ENCODE measurements at regions of chr21 and their contacts with region 1.

Region 1: GRCh38 chr21:41678944-41679343 is 87.9 kb downstream of the RIPK4 start:
- DNase-seq: peak; percentile 98
- ATAC-seq: peak; percentile 93
- H3K4me3 ChIP-seq: peak overlapping the region; percentile 38 to 70 (median 40); a peak in 5 of 6 replicates
- H3K27ac ChIP-seq: peak overlapping the region; percentile 69
- H3K4me1 ChIP-seq: peaks cover 51% of the 10 kb centered on the region
- H3K27me3 ChIP-seq: peaks cover 2 to 28% of the 10 kb centered on the region in 2 experiments; a peak in 4 of 5 replicates
- CTCF ChIP-seq: no peak
- EP300 ChIP-seq: no peak
- POLR2A ChIP-seq: peak; percentile 17 to 45; a peak in 1 of 4 replicates
- RAD21 ChIP-seq: no peak

Region 2: DNA sequence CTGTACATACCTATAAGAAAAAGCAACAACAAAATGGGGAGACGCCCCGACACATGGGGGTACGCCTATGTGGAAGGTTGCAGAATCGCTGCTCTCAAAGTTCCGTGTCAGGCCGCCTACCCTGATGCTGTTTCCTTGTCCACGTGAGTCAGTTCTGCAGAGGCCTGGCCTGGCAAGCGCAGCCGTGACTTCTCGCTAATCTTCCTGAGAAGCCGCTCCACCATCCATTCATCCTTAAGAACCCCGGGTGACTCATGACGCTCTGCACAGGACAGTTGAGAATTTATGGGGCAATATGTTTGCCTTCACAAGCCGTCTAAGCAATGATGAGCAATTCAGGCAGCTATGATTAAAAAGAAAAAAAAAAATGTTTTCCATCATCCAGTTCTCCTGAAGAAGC is 48.7 kb before region 1 on chr21:
- CTCF ChIA-PET with region 1: no interaction called
- POLR2A ChIA-PET with region 1: no interaction called
- in situ Hi-C with region 1: no loop called
- intact Hi-C with region 1: no loop called
- DNase-seq: no peak
- ATAC-seq: no peak
- H3K4me3 ChIP-seq: no peak overlapping the region
- H3K27ac ChIP-seq: no peak overlapping the region
- H3K4me1 ChIP-seq: peaks cover 7% of the 10 kb centered on the region
- H3K27me3 ChIP-seq: 0 out of 5 replicates have a peak, but pooled peaks cover 0 to 4% of the 10 kb centered on the region in 2 experiments
- CTCF ChIP-seq: no peak
- EP300 ChIP-seq: no peak
- POLR2A ChIP-seq: no peak
- RAD21 ChIP-seq: no peak

Region 3: GRCh38 chr21:41663801-41664788 is 14.8 kb before region 1 on chr21:
- CTCF ChIA-PET with region 1: no interaction called
- POLR2A ChIA-PET with region 1: interaction called, 13 read pairs
- in situ Hi-C with region 1: no loop called
- intact Hi-C with region 1: no loop called
- DNase-seq: peak; percentile 80
- ATAC-seq: peak; percentile 87
- H3K4me3 ChIP-seq: peak overlapping the region in 2 of 3 experiments; percentile 4 to 60; a peak in 2 of 6 replicates
- H3K27ac ChIP-seq: no peak overlapping the region
- H3K4me1 ChIP-seq: peaks cover 24% of the 10 kb centered on the region
- H3K27me3 ChIP-seq: peaks cover 2 to 37% of the 10 kb centered on the region in 2 experiments; a peak in 4 of 5 replicates
- CTCF ChIP-seq: peak; percentile 64
- EP300 ChIP-seq: no peak
- POLR2A ChIP-seq: no peak
- RAD21 ChIP-seq: 0 out of 2 replicates have a peak, but pooled peaks have one; percentile 28

Region 4: DNA sequence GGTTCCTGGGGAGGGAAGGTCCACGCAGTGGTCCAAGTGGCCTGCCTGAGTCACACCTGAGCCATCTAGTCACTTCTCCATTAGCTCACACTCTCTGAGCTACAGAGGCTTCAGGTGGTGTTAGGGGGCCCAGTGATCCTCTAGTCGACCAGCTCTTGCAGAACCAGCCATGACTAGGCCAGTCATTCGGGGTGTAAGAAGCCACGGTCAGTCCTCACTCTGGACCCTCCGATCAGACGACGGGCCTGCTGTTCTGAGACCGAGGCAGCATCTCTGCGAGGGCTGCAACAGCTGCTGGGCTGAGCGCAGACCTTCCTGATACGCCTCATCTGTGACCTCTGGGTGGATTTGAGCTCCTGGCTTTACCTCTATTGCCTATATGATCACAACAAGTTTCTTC is 19.1 kb after region 1 on chr21:
- CTCF ChIA-PET with region 1: no interaction called
- POLR2A ChIA-PET with region 1: no interaction called
- in situ Hi-C with region 1: no loop called
- intact Hi-C with region 1: no loop called
- DNase-seq: no peak
- ATAC-seq: no peak
- H3K4me3 ChIP-seq: no peak overlapping the region
- H3K27ac ChIP-seq: no peak overlapping the region
- H3K4me1 ChIP-seq: peaks cover 44% of the 10 kb centered on the region
- H3K27me3 ChIP-seq: no peaks in the 10 kb centered on the region; a peak in 1 of 5 replicates
- CTCF ChIP-seq: no peak
- EP300 ChIP-seq: no peak
- POLR2A ChIP-seq: no peak
- RAD21 ChIP-seq: no peak

Region 5: GRCh38 chr21:42009831-42010523 is 331.0 kb after region 1 on chr21 and contains the start of gene ZBTB21:
- CTCF ChIA-PET with region 1: no interaction called
- POLR2A ChIA-PET with region 1: no interaction called
- in situ Hi-C with region 1: no loop called
- intact Hi-C with region 1: no loop called
- DNase-seq: peak; percentile 96
- ATAC-seq: peak; percentile 87
- H3K4me3 ChIP-seq: peak within 1 kb of the TSS; percentile 71 to 91 (median 78)
- H3K27ac ChIP-seq: peak within 1 kb of the TSS; percentile 98
- H3K4me1 ChIP-seq: peaks cover 33% of the 10 kb centered on the region
- H3K27me3 ChIP-seq: no peaks in the 10 kb centered on the region
- CTCF ChIP-seq: no peak
- EP300 ChIP-seq: no peak
- POLR2A ChIP-seq: peak; percentile 87 to 92
- RAD21 ChIP-seq: no peak
- total RNA-seq, gene ZBTB21: 6.1 and 7.7 TPM in 2 replicates